Activated CD4-positive, alpha-beta memory T cell treated with anti-CD3 and anti-CD28 coated beads, Interleukin-2, amount 10 ng/mL, durations not matched to agents 7 days and 5 days (primary cell): ENCODE measurements at regions of chr5 and their contacts with region 1.

Region 1: DNA sequence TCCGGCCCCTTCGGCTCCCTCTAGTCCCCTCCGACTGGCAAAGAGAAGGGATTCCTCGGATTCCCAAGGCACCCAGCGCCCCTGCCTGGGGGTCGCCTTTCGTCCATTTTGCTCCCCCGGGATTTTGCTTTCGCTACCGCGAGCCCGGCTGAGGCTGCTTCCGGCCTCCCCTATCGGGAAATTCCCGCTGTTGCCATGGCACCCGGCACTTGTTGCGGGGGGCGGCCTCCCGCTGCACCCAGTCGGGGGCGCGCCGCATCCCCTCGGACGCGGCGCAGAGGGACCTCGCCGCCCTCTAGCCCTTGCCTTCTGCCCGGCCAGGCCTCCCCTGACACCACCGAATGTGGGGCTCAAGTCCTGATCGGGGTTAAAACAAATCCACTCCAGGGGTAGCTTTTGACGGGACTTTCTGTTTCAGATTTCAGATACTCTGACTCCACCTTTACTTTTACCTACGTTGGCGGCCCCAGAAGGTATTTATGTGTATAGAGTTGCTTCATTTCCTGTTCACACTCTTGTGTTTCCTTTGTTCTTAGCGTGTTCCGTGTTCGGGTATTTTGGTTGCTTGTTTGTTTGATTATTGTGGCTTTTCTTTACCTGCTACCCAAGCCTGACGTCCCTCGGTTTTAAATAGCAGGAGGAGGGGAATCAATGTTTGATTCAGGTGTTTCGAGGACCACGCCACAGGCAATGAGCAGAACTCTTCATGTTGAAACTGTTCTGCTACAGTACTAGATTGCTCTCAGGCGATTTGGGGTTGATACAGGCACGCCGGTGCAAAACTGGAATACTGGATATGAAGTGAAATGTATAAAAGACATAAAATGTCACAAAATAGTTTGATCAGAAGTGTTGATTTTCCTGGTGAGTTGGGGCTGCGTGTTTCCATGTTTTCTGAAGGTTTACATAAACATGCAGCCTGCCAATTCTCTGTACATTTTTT is 1.5 kb downstream of the PARP8 start:
- DNase-seq: peak; percentile 79
- H3K4me3 Mint-ChIP-seq: peak overlapping the region; percentile 99
- H3K27ac Mint-ChIP-seq: peak overlapping the region; percentile 99
- H3K4me1 Mint-ChIP-seq: peaks cover 50% of the 10 kb centered on the region
- H3K27me3 Mint-ChIP-seq: no peaks in the 10 kb centered on the region

Region 2: DNA sequence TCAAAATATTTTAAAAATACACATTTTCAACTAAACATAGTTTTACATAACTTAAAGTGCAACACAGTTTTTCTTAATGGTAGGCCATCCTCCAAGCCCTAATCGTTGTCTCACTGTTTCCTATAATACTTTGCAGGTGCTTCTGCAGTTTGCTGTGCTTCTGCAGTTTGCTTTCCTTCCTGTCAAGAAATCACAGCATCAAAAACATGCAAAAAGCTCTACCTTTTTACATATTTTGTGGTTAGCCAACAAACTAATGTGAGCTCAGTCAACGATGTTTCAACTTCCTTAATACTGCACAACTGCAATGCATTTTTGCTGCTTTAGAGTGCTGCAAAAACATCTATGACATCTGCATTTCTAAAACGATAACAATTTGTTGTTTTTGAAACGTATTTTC is 252.0 kb before region 1 on chr5:
- CTCF ChIA-PET with region 1: no interaction called
- POLR2A ChIA-PET with region 1: no interaction called
- DNase-seq: no peak
- H3K4me3 Mint-ChIP-seq: no peak overlapping the region
- H3K27ac Mint-ChIP-seq: peak overlapping the region; percentile 58
- H3K4me1 Mint-ChIP-seq: peaks cover 57% of the 10 kb centered on the region
- H3K27me3 Mint-ChIP-seq: no peaks in the 10 kb centered on the region

Region 3: GRCh38 chr5:50440651-50441492 is 227.1 kb before region 1 on chr5 and contains the start of gene EMB:
- CTCF ChIA-PET with region 1: interaction called, 12 read pairs
- POLR2A ChIA-PET with region 1: interaction called, 66 read pairs
- DNase-seq: peak; percentile 85
- H3K4me3 Mint-ChIP-seq: peak within 1 kb of the TSS; percentile 97
- H3K27ac Mint-ChIP-seq: peak within 1 kb of the TSS; percentile 94
- H3K4me1 Mint-ChIP-seq: peaks cover 70% of the 10 kb centered on the region
- H3K27me3 Mint-ChIP-seq: no peaks in the 10 kb centered on the region
- total RNA-seq, gene EMB: 181 to 188 TPM

Region 4: GRCh38 chr5:50595199-50595598 is 72.7 kb before region 1 on chr5:
- CTCF ChIA-PET with region 1: interaction called, 3 read pairs
- POLR2A ChIA-PET with region 1: interaction called, 38 read pairs
- DNase-seq: no peak
- H3K4me3 Mint-ChIP-seq: no peak overlapping the region
- H3K27ac Mint-ChIP-seq: peak overlapping the region; percentile 75
- H3K4me1 Mint-ChIP-seq: peaks cover 58% of the 10 kb centered on the region
- H3K27me3 Mint-ChIP-seq: no peaks in the 10 kb centered on the region

Region 5: DNA sequence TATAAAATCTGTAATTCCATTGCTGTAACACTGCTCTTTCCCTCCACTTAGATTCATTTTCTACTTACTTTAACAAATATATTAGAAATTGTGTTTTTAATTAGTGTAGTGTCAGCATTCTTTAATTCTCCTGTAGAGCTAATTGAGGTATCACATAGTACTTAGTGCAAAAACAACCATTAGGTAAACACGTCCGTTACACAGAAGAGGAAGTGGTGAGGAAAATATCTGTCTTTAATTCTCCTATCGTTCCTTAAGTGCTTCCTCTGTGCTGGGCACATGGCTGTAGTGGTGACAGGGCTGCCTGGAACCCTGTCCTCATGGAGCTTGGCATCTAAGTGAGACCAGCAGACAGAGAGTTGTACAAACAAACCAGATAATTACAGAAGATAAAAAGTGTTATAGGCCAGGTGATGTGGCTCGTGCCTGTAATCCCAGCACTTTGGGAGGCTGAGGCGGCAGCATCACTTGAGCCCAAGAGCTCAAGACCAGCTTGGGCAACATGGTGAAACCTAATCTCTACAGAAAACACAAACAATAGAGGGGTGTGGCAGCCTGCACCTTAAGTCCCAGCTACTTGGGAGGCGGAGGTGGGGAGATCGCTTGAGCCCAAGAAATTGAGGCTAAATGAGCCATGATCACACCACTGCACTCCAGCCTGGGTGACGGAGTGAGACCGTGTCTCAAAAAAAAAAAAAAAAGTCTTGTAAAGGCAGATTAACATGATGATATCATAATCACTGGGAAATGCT is 34.9 kb after region 1 on chr5:
- CTCF ChIA-PET with region 1: no interaction called
- POLR2A ChIA-PET with region 1: interaction called, 15 read pairs
- DNase-seq: no peak
- H3K4me3 Mint-ChIP-seq: no peak overlapping the region
- H3K27ac Mint-ChIP-seq: peak overlapping the region; percentile 63
- H3K4me1 Mint-ChIP-seq: peaks cover 45% of the 10 kb centered on the region
- H3K27me3 Mint-ChIP-seq: no peaks in the 10 kb centered on the region

Region 6: GRCh38 chr5:50744776-50745175 is 76.9 kb after region 1 on chr5:
- CTCF ChIA-PET with region 1: no interaction called
- POLR2A ChIA-PET with region 1: interaction called, 14 read pairs
- DNase-seq: no peak
- H3K4me3 Mint-ChIP-seq: peak overlapping the region; percentile 86
- H3K27ac Mint-ChIP-seq: peak overlapping the region; percentile 79
- H3K4me1 Mint-ChIP-seq: peaks cover 59% of the 10 kb centered on the region
- H3K27me3 Mint-ChIP-seq: no peaks in the 10 kb centered on the region